ENCODE measurements at regions of chr20 and their contacts with region 1.

Region 1: GRCh38 chr20:22586645-22587310 is 2.4 kb upstream of the FOXA2 start:
- DNase-seq: peak; percentile 71 to 83
- ATAC-seq: peak; percentile 35 to 63
- H3K4me3 ChIP-seq: peak overlapping the region; percentile 54
- H3K27ac ChIP-seq: peak overlapping the region; percentile 94 to 96
- H3K4me1 ChIP-seq: peaks cover 24% of the 10 kb centered on the region
- CTCF ChIP-seq: peak; percentile 98
- EP300 ChIP-seq: no peak
- POLR2A ChIP-seq: no peak
- RAD21 ChIP-seq: peak; percentile 94 to 100

Region 2: DNA sequence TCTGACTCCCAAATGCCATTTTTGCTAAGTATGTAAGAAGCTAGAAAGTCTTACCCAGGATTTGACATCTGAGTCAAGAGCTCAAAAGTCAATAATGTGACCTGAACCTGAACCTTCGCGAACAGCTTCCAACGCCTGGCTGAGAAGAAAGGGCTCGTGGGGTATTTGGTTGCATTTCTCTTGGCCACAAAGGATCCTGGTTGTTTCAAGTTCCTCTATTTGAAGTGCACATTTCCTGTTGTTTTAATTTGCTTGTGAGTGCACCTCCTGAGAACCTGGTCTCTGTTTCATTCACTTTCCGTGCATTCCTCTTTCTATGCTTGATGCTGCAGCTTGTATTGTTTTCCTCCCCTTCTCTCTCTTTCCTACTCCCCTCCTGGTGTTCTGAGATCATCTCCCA is 214.9 kb before region 1 on chr20:
- CTCF ChIA-PET with region 1: interaction called, 60 read pairs
- POLR2A ChIA-PET with region 1: interaction called, 3 read pairs
- DNase-seq: no peak
- ATAC-seq: no peak
- H3K4me3 ChIP-seq: no peak overlapping the region
- H3K27ac ChIP-seq: no peak overlapping the region
- H3K4me1 ChIP-seq: peaks cover 38% of the 10 kb centered on the region
- CTCF ChIP-seq: no peak
- EP300 ChIP-seq: no peak
- POLR2A ChIP-seq: no peak
- RAD21 ChIP-seq: no peak

Region 3: GRCh38 chr20:22411627-22412450 is 174.9 kb before region 1 on chr20:
- CTCF ChIA-PET with region 1: interaction called, 47 read pairs
- POLR2A ChIA-PET with region 1: interaction called, 17 read pairs
- DNase-seq: peak; percentile 97 to 99
- ATAC-seq: peak; percentile 96 to 98
- H3K4me3 ChIP-seq: 0 out of 3 replicates have a peak overlapping the region, but pooled peaks have one; percentile 12
- H3K27ac ChIP-seq: peak overlapping the region; percentile 97 to 98
- H3K4me1 ChIP-seq: peaks cover 62% of the 10 kb centered on the region
- CTCF ChIP-seq: no peak
- EP300 ChIP-seq: peak; percentile 76 to 91
- POLR2A ChIP-seq: no peak
- RAD21 ChIP-seq: peak; percentile 44 to 52; a peak in 4 of 5 replicates

Region 4: GRCh38 chr20:22499515-22500166 is 87.1 kb before region 1 on chr20:
- CTCF ChIA-PET with region 1: interaction called, 88 read pairs
- POLR2A ChIA-PET with region 1: no interaction called
- DNase-seq: no peak
- ATAC-seq: no peak
- H3K4me3 ChIP-seq: no peak overlapping the region
- H3K27ac ChIP-seq: no peak overlapping the region
- H3K4me1 ChIP-seq: 0 out of 3 replicates have a peak, but pooled peaks cover 3% of the 10 kb centered on the region
- CTCF ChIP-seq: no peak
- EP300 ChIP-seq: no peak
- POLR2A ChIP-seq: no peak
- RAD21 ChIP-seq: no peak

Region 5: DNA sequence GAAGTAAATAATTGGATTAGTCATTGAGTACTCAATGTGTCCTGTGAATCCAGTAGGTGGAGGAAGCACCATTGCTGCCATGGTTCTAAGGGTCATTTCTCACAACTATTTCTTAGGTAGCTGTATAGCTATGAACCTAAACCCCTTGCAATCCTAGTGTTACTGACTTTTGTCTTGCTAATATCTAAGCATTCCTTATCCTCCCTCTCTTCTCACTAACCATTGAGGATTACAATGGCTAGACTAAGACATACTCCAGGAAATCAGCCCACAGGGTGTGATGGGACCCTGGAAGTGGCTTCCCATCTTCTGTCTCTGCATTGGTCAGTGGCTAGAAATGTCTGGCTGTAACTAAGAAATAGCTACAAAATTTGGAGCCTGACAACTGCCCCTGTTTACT is 24.9 kb after region 1 on chr20:
- CTCF ChIA-PET with region 1: interaction called, 53 read pairs
- POLR2A ChIA-PET with region 1: no interaction called
- DNase-seq: no peak
- ATAC-seq: no peak
- H3K4me3 ChIP-seq: no peak overlapping the region
- H3K27ac ChIP-seq: no peak overlapping the region
- H3K4me1 ChIP-seq: peaks cover 5% of the 10 kb centered on the region
- CTCF ChIP-seq: no peak
- EP300 ChIP-seq: no peak
- POLR2A ChIP-seq: no peak
- RAD21 ChIP-seq: no peak

Region 6: DNA sequence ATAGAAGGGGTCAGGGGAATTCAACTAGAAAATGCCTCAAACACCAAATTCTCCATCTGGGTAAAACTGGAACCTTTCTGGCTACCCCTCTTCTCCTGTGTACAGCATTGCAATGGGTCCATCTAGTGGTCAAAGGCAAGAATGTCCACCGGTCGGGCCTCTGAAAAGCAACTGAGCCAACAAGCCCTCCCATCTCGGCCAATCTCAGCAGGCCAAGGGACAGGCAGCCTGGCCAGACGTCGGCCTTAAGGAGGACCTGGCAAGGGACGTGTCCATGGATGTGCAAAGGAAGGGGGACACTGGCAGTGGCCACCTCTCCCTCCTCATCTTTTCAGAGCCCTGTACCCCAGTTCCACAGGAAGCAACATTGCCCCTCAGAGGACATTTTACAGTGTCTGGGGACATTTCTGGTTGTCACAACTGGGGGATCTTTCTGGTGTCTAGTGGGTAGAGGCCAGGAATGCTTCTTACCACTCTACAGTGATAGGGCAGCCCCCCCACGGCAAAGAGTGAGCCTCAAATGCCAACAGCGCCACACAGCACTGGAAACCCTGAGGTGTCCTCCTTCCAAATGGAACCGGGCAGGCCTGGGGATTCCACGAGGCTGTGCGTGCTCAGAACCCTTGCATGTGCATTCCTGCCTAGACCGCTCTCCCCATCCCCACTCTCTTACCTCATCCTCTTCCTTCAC is 97.4 kb after region 1 on chr20:
- CTCF ChIA-PET with region 1: interaction called, 224 read pairs
- POLR2A ChIA-PET with region 1: interaction called, 3 read pairs
- DNase-seq: peak; percentile 71 to 85
- ATAC-seq: peak; percentile 76 to 92
- H3K4me3 ChIP-seq: no peak overlapping the region
- H3K27ac ChIP-seq: peak overlapping the region; percentile 41 to 66; a peak in 5 of 6 replicates
- H3K4me1 ChIP-seq: peaks cover 30% of the 10 kb centered on the region
- CTCF ChIP-seq: peak; percentile 98
- EP300 ChIP-seq: no peak
- POLR2A ChIP-seq: no peak
- RAD21 ChIP-seq: peak; percentile 100

Region 7: GRCh38 chr20:22878166-22878565 is 291.4 kb after region 1 on chr20:
- CTCF ChIA-PET with region 1: no interaction called
- POLR2A ChIA-PET with region 1: no interaction called
- DNase-seq: no peak
- ATAC-seq: no peak
- H3K4me3 ChIP-seq: no peak overlapping the region
- H3K27ac ChIP-seq: no peak overlapping the region
- H3K4me1 ChIP-seq: no peaks in the 10 kb centered on the region
- CTCF ChIP-seq: no peak
- EP300 ChIP-seq: no peak
- POLR2A ChIP-seq: no peak
- RAD21 ChIP-seq: no peak

Measured in A549 (cell line).